ENCODE measurements at regions of chr17 and their contacts with region 1.

Region 1: DNA sequence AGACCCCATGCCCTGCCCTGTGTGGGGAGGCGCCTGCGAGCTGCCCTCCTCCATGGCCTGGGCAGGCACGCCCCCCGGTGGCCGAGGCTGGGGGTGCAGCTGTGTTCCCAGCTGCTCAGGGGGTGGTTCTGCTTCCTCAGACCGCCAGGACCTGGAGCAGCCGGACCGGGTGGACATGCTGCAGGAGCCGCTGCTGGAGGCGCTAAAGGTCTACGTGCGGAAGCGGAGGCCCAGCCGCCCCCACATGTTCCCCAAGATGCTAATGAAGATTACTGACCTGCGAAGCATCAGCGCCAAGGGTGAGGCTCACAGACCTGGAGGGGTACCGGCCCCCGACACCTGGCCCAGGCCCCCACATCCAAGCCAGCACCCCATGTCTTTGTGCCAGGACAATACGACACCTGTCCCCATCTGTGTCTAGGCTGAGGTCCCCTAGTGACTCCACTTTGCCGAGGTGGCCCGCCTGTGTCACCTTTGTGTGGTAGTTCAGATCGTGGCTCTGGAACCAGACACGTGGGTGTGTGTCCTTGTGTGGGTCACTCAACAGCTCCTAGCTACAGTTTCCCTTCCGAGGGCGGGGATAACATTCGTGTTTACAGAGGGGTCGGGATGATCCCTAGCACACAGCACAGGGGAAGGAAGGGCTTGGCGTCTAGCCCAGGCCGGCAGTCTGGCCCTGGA is 9.3 kb downstream of the GJD3 start:
- DNase-seq: peak; percentile 76
- H3K4me3 Mint-ChIP-seq: no peak overlapping the region
- H3K27ac Mint-ChIP-seq: peak overlapping the region; percentile 21
- H3K4me1 Mint-ChIP-seq: peaks cover 23% of the 10 kb centered on the region
- H3K27me3 Mint-ChIP-seq: peaks cover 4% of the 10 kb centered on the region

Region 2: DNA sequence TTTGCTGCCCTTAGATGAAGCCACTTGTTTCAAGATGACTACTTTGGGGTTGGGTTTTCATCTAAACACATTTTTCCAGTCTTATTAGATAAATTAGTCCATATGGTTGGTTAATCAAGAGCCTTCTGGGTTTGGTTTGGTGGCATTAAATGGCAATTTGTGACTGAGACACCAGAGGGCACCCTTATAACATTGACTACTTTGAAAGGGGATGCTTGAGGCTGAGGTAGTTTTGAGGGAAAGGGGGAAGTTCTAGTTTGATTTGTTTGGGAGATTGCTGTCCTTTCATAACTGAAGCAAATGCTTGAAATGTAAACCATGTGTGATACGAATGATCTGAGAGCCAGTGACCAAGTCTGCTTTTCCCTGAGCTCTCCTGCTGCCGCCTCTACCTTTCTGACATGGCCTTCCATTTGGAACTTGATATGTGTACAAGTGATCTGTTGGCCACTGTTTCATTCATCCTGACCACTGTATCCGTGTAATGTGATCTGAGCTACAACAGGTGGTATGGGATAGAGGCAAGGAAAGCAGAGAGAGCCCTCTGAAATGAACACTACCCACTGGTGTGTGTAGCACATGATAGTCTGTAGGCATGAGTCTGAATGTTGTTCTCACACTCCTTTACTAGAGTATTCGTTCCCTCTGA is 52.1 kb before region 1 on chr17:
- CTCF ChIA-PET with region 1: interaction called, 173 read pairs
- POLR2A ChIA-PET with region 1: interaction called, 35 read pairs
- DNase-seq: peak; percentile 50
- H3K4me3 Mint-ChIP-seq: no peak overlapping the region
- H3K27ac Mint-ChIP-seq: no peak overlapping the region
- H3K4me1 Mint-ChIP-seq: peaks cover 15% of the 10 kb centered on the region
- H3K27me3 Mint-ChIP-seq: no peaks in the 10 kb centered on the region

Region 3: DNA sequence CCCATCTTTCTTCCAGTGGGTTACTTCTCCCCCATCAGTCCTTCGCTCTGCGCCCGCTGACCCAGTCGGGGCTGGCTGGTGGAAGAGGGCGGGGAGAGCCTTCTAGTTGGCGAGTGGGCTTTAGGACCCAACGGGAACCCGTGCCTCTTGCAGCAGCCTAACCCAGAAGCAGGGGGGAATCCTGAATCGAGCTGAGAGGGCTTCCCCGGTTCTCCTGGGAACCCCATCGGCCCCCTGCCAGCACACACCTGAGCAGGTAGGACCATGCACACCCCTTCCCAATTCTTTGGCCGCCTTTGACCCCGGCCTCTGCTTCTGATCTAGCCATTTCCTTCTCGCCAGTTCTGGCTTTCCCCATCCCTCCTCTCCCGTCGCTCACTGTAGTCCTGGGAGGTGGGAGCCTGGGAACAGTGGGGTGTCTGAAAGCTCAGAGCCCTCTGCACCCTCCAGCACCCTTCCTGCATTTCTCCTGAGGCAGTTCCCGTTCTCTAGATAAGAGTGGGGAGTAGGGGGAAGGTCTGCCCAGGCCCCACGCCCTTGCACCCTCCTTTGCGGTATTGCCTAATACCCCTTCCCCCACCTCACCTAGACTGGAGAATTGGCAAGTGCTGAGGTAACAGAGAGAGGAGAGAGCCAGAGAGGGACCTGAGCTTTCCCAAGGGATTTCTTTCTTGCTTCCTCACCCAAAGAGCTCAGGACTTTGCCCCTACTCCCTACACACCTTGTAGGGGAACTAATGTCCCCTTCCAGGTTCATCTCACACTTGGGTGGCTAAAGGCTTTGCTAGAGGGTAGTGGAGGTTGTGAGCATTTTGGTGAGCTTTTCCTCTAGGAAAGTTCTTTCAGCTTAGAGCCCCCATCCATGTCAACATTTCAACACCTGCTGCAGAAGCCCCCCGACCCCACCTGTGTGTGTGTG is 46.0 kb before region 1 on chr17 and contains the start of gene RARA:
- CTCF ChIA-PET with region 1: interaction called, 173 read pairs
- POLR2A ChIA-PET with region 1: interaction called, 35 read pairs
- DNase-seq: peak; percentile 16
- H3K4me3 Mint-ChIP-seq: no peak within 1 kb of the TSS
- H3K27ac Mint-ChIP-seq: no peak within 1 kb of the TSS
- H3K4me1 Mint-ChIP-seq: peaks cover 48% of the 10 kb centered on the region
- H3K27me3 Mint-ChIP-seq: no peaks in the 10 kb centered on the region
- total RNA-seq, gene RARA: 65.2 to 65.5 TPM

Region 4: DNA sequence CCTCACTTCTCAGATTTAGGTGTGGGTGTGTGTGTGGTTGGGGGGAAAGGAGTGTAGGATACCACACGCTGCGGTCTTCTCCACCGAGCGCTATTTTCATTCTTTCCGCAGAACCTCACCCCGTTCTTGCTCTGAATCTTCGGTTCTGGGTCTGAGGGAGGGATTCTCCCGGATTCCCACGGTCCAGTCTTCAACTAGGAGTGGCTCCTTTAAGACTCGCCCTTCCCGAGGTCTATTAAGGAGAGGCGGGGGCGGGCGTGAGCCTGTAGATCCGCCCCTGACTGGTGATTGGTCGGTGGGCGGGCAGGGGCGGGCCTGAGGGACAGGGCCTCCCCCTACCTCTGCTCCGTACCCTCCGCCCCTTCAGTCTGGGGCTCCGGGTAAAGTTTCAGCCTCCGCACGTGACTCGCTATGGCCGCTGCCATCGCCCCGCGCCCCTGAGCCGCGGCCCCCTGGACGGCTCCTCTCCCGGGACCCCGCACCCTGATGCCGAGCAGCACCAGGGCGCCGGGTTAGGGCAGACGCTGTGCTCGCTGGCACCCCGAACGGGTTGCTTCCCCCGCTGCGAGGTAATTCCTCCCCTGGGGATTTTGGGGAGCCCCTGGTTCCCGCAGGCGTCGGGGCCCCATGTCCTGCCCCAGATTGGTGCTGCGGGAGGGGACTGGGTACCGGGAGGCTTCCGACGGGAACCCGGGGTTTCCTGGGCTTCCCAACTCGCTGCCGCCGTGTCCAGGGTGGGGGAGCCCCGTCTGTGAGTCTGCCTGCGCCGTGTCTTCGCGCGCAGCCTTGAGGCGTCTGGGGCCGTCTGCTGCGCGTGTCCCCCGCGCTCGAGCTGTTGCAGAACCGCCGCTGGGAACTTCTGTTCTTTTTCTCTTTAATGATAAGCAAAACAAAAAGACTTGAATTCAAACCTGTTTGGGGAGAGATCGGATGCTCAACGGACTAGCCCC is 37.1 kb before region 1 on chr17:
- CTCF ChIA-PET with region 1: interaction called, 30 read pairs
- POLR2A ChIA-PET with region 1: interaction called, 6 read pairs
- DNase-seq: peak; percentile 94
- H3K4me3 Mint-ChIP-seq: peak overlapping the region; percentile 90
- H3K27ac Mint-ChIP-seq: peak overlapping the region; percentile 93
- H3K4me1 Mint-ChIP-seq: peaks cover 76% of the 10 kb centered on the region
- H3K27me3 Mint-ChIP-seq: no peaks in the 10 kb centered on the region

Region 5: GRCh38 chr17:40323391-40324381 is 31.6 kb before region 1 on chr17:
- CTCF ChIA-PET with region 1: interaction called, 30 read pairs
- POLR2A ChIA-PET with region 1: interaction called, 7 read pairs
- DNase-seq: peak; percentile 52
- H3K4me3 Mint-ChIP-seq: peak overlapping the region; percentile 90
- H3K27ac Mint-ChIP-seq: peak overlapping the region; percentile 93
- H3K4me1 Mint-ChIP-seq: peaks cover 88% of the 10 kb centered on the region
- H3K27me3 Mint-ChIP-seq: no peaks in the 10 kb centered on the region

Region 6: GRCh38 chr17:40340880-40341807 is 14.1 kb before region 1 on chr17:
- CTCF ChIA-PET with region 1: interaction called, 10 read pairs
- POLR2A ChIA-PET with region 1: interaction called, 6 read pairs
- DNase-seq: peak; percentile 91
- H3K4me3 Mint-ChIP-seq: peak overlapping the region; percentile 65
- H3K27ac Mint-ChIP-seq: peak overlapping the region; percentile 84
- H3K4me1 Mint-ChIP-seq: peaks cover 84% of the 10 kb centered on the region
- H3K27me3 Mint-ChIP-seq: no peaks in the 10 kb centered on the region